ENCODE measurements at regions of chr16 and their contacts with region 1.

Region 1: GRCh38 chr16:58129097-58129936 is at the start of gene CFAP20:
- DNase-seq: peak; percentile 97
- H3K4me3 Mint-ChIP-seq: peak within 1 kb of the TSS; percentile 78
- H3K27ac Mint-ChIP-seq: peak within 1 kb of the TSS; percentile 69
- H3K4me1 Mint-ChIP-seq: peaks cover 30% of the 10 kb centered on the region
- H3K27me3 Mint-ChIP-seq: no peaks in the 10 kb centered on the region
- total RNA-seq, gene CFAP20: 51.6 and 51.7 TPM in 2 replicates

Region 2: GRCh38 chr16:57609541-57610401 is 519.5 kb before region 1 on chr16:
- intact Hi-C with region 1: loop called (anchors 5 kb)
- DNase-seq: peak; percentile 74
- H3K4me3 Mint-ChIP-seq: peak overlapping the region; percentile 58
- H3K27ac Mint-ChIP-seq: peak overlapping the region; percentile 87
- H3K4me1 Mint-ChIP-seq: peaks cover 60% of the 10 kb centered on the region
- H3K27me3 Mint-ChIP-seq: no peaks in the 10 kb centered on the region

Region 3: GRCh38 chr16:57734925-57735754 is 394.2 kb before region 1 on chr16:
- intact Hi-C with region 1: loop called (anchors 1 kb)
- DNase-seq: peak; percentile 98
- H3K4me3 Mint-ChIP-seq: peak overlapping the region; percentile 97
- H3K27ac Mint-ChIP-seq: peak overlapping the region; percentile 96
- H3K4me1 Mint-ChIP-seq: peaks cover 15% of the 10 kb centered on the region
- H3K27me3 Mint-ChIP-seq: no peaks in the 10 kb centered on the region

Region 4: DNA sequence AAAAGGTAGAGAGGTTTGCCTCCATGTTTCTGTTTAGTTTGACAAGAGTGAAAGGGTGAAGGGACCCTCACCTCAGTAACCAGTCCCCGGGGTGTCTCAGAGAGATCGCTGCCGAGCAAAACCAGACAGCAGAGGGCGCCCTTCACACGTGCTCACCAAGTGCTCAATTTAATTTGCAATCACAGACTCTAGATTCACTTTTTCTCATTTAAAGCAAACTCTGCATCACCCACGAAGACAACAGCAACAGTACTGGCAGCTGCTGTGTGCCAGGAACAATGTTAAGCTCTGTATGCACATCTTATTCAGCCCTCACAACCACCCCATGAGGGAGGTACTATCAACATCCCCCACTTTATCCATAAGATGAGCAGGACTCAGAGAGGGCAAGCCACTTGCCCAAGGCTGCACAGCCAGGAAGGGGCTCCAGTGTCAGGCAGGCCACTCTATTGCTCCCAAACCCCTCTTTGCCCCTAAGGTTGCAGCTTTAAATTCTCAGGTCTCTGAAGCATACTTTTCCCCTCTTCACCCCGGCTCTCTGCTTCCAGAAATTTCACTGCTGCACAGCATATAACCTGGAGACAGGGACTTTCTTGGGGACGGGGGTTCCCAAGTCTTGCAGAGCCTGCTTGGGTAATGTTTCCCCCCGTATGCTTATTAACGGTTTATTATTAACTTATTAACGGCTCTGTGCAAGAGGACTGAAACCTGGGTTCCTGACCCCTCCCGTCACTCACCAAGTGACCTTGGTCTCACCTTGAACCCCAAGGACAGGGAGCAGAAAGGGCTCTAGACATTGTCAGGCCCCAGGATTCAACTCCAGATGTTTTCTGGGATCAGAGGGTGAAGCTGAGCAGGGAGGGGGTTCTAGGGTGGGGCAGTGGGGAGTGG is 229.3 kb before region 1 on chr16:
- intact Hi-C with region 1: loop called (anchors 10 kb)
- DNase-seq: peak; percentile 64
- H3K4me3 Mint-ChIP-seq: no peak overlapping the region
- H3K27ac Mint-ChIP-seq: no peak overlapping the region
- H3K4me1 Mint-ChIP-seq: no peaks in the 10 kb centered on the region
- H3K27me3 Mint-ChIP-seq: peaks cover 7% of the 10 kb centered on the region

Region 5: GRCh38 chr16:58025351-58026138 is 103.8 kb before region 1 on chr16 and contains the start of gene MMP15:
- intact Hi-C with region 1: loop called (anchors 1 kb)
- DNase-seq: peak; percentile 48
- H3K4me3 Mint-ChIP-seq: peak within 1 kb of the TSS; percentile 85
- H3K27ac Mint-ChIP-seq: peak within 1 kb of the TSS; percentile 72
- H3K4me1 Mint-ChIP-seq: peaks cover 10% of the 10 kb centered on the region
- H3K27me3 Mint-ChIP-seq: peaks cover 21% of the 10 kb centered on the region
- total RNA-seq, gene MMP15: 1.3 and 1.9 TPM in 2 replicates

Region 6: DNA sequence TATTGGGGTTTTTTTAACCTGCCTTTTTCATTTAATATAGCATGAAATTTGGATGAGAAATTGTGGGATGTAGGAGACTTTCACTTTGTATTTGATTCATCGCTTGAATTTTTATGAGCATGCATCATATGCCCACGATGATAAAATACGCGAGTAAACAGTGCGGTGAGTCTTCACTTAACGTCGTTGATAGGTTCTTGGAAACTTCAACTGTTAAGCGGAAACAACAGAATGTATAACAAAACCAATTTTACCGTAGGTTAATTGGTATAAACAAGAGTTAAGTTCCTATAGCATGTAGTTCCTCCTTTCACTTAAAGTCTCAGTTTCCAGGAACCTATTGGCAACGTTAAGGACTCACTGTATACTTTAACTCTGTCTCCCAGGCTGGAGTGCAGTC is 75.0 kb before region 1 on chr16:
- intact Hi-C with region 1: loop called (anchors 2 kb)
- DNase-seq: no peak
- H3K4me3 Mint-ChIP-seq: no peak overlapping the region
- H3K27ac Mint-ChIP-seq: no peak overlapping the region
- H3K4me1 Mint-ChIP-seq: peaks cover 3% of the 10 kb centered on the region
- H3K27me3 Mint-ChIP-seq: no peaks in the 10 kb centered on the region

Region 7: DNA sequence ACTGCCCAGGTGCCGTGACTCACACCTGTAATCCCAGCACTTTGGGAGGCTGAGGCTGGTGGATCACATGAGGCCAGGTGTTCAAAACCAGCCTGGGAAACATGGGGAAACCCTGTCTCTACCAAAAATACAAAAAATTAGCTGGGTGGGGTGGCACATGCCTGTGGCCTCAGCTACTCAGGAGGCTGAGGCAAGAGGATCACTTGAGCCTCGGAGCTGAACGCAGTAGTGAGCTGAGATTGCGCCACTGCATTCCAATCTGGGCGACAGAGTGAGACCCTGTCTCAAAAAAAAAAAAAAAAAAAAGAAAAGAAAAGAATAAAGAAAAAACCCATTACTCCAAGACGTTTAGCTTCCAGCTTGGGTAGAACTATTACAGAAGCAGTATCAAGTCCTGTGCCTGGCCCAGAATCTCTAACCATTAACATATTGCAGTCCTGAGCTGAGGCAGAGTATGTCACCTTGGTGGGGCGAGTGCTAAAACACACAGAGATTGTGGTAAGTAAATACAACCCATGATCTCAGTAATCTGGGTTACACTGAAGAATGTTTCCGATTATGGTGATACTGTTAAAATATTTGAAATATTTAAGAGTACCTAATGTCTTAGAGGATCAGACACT is 23.0 kb after region 1 on chr16:
- intact Hi-C with region 1: no loop called
- DNase-seq: no peak
- H3K4me3 Mint-ChIP-seq: no peak overlapping the region
- H3K27ac Mint-ChIP-seq: no peak overlapping the region
- H3K4me1 Mint-ChIP-seq: peaks cover 4% of the 10 kb centered on the region
- H3K27me3 Mint-ChIP-seq: no peaks in the 10 kb centered on the region

Region 8: GRCh38 chr16:58198022-58198683 is 68.8 kb after region 1 on chr16 and contains the start of gene CSNK2A2:
- intact Hi-C with region 1: loop called (anchors 2 kb)
- DNase-seq: peak; percentile 63
- H3K4me3 Mint-ChIP-seq: peak within 1 kb of the TSS; percentile 84
- H3K27ac Mint-ChIP-seq: peak within 1 kb of the TSS; percentile 54
- H3K4me1 Mint-ChIP-seq: peaks cover 34% of the 10 kb centered on the region
- H3K27me3 Mint-ChIP-seq: peaks cover 12% of the 10 kb centered on the region
- total RNA-seq, gene CSNK2A2: 90.5 and 93.9 TPM in 2 replicates